Activated CD8-positive, alpha-beta memory T cell treated with anti-CD3 and anti-CD28 coated beads, Interleukin-2, amount 10 ng/mL, durations not matched to agents 7 days and 5 days (primary cell): ENCODE measurements at regions of chr1 and their contacts with region 1.

Region 1: DNA sequence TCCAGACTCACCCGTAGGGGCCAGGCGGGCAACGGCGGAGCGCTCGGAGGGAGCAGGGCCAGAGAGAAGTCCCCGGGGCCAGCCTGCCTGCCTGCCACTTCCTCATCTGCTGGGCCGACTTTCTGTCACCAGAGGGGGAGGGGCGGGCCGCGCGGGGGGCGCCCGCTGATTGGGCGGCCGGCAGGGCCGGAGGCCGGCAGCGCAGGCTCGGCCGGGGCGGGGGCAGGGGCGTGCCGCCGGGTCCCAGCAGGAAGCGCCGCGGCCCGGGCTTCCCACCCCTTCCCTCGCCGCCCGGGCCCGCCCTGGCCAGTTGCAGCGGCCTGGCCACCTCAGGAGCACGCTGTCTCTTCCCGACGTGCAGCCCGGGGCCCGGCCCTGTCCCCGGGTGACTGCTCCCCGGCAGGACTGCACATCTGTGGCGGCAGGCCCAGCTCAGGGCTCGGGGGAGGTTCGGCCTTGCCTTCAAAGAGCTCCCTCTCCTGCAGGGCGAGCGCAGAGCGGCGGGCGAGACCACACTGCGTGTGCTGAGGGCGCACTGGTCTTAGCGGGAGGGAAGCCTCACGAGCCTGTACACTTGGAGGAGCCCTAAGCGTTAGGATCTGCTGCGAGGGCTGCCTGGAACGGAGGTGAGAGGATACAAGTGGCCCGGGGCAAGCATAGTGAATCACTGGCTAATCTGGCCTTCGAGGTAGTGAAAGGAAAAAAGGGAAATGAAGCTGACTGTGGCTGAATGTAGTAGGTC is at the start of gene ELOVL1:
- DNase-seq: peak; percentile 94
- ATAC-seq: peak; percentile 87
- H3K4me3 Mint-ChIP-seq: peak within 1 kb of the TSS; percentile 96
- H3K27ac Mint-ChIP-seq: peak within 1 kb of the TSS; percentile 92
- H3K4me1 Mint-ChIP-seq: peaks cover 35% of the 10 kb centered on the region
- H3K27me3 Mint-ChIP-seq: no peaks in the 10 kb centered on the region
- total RNA-seq, gene ELOVL1: 64.4 to 74.2 TPM

Region 2: GRCh38 chr1:43389326-43390313 is 21.5 kb after region 1 on chr1 and contains the starts of genes MED8 and SZT2:
- CTCF ChIA-PET with region 1: interaction called, 12 read pairs
- DNase-seq: peak; percentile 96
- ATAC-seq: peak; percentile 95
- H3K4me3 Mint-ChIP-seq: peak within 1 kb of the TSS; percentile 100
- H3K27ac Mint-ChIP-seq: peak within 1 kb of the TSS; percentile 97
- H3K4me1 Mint-ChIP-seq: peaks cover 35% of the 10 kb centered on the region
- H3K27me3 Mint-ChIP-seq: no peaks in the 10 kb centered on the region
- total RNA-seq, gene MED8: 38.7 to 43.6 TPM
- total RNA-seq, gene SZT2: 52.2 to 60.2 TPM